Common myeloid progenitor, CD34-positive (primary cell): ENCODE measurements at regions of chr2 and their contacts with region 1.

Region 1: DNA sequence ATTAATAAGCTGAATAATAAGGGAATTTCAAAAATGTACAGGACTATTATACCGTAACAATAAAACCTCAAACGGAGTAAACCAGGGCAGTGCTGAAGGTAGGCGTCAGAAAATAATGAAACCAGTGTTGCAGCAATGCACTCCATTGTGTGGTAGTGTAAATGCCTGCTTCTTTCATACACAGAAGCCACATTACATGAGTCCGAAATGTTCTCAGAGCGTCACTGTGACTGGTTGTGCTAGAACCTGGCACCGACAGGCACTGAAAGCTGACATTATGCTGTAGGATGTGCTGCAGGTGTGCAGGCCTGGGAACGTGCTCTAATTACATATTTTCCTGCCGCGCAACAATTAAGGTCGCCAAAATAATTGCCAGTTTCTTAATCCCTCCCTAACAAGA is 53.3 kb downstream of the ZEB2 start:
- DNase-seq: no peak
- H3K4me3 ChIP-seq: no peak overlapping the region
- H3K27ac ChIP-seq: no peak overlapping the region
- H3K4me1 ChIP-seq: peaks cover under 1 to 17% (median 6%) of the 10 kb centered on the region in 4 experiments
- H3K27me3 ChIP-seq: no peaks in the 10 kb centered on the region

Region 2: GRCh38 chr2:144477957-144478311 is 11.3 kb after region 1 on chr2:
- CTCF ChIA-PET with region 1: interaction called, 17 read pairs
- POLR2A ChIA-PET with region 1: no interaction called
- DNase-seq: no peak
- H3K4me3 ChIP-seq: no peak overlapping the region
- H3K27ac ChIP-seq: no peak overlapping the region
- H3K4me1 ChIP-seq: peaks cover 0 to 36% (median 14%) of the 10 kb centered on the region in 4 experiments
- H3K27me3 ChIP-seq: no peaks in the 10 kb centered on the region